Common myeloid progenitor, CD34-positive (primary cell): ENCODE measurements at regions of chr12 and their contacts with region 1.

Region 1: DNA sequence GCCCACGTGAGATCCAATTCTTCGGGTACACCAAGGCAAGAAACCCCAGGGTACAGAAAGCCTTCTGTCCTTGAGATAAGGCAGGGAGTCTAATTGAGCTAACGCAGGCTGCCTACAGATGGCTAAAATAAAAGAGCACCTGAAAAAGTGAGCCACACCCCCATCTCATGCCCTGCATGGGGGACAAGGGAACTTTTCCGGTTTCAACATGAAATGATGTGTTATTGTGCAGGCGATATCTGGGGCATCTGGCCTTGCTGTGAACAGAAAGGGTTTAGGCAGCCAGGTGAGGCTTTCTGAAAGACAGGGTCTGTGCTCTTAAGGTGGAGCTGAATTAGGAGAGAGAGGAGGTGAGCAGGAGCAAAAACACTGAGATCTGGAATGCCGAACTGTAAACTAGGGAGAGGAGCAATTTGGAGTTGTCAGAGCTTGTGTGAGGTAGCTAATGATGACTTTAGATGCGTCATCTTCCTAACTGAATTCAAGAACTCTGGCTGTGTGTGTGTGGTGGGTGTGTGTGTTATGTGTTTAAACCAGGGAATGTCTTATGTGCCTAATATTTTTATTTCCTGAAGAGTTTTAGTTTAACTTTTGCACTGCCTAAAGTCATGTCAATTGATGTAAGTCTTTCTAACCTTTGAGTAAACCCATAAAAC is 20.1 kb upstream of the LDHB start:
- DNase-seq: no peak
- H3K4me3 ChIP-seq: no peak overlapping the region
- H3K27ac ChIP-seq: peak overlapping the region in 1 of 2 experiments; percentile 78
- H3K4me1 ChIP-seq: peaks cover 19 to 34% (median 27%) of the 10 kb centered on the region in 4 experiments
- H3K27me3 ChIP-seq: no peaks in the 10 kb centered on the region

Region 2: DNA sequence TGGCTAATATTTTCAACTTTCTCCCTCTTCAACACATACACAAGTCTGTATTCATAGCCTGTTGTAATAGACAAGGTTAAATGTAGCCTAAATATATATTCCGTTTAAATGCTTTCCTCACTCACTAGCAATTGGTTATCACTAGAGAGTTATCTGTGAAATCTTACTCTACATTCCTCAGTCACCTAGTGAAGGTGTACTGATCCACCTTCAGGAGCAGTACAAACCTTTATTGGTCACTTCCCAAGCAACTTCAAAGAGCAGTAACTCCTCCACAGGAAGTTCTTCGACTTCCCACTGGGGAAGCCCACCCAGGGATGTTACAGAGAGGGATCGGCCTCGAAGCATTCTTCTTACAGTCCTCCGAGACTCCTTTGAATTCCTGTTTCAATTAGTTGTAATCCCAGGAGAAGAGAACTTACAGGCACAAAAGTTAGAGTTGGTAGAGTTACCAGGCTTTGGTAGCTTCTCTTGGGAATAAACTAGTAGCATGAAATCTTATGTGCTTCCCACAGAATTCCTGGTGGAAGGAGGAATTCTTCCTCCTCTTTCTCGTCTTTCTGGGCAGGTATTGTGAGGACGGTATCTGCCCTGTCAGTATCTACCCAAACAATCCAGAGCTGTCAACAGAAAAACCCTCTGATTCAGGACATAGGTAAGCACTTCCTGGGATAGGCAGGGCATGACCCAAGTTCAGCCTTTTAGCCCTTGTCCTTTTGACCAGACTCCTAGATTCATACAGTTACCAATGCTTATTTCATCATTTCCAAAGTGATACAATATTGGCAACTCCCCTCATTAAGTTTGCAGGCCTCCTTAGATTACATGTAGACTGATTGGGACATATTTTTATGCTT is 73.3 kb before region 1 on chr12 and contains the start of gene GYS2:
- CTCF ChIA-PET with region 1: interaction called, 19 read pairs
- POLR2A ChIA-PET with region 1: no interaction called
- DNase-seq: no peak
- H3K4me3 ChIP-seq: no peak within 1 kb of the TSS
- H3K27ac ChIP-seq: no peak within 1 kb of the TSS
- H3K4me1 ChIP-seq: peaks cover 0 to 4% (median 0%) of the 10 kb centered on the region in 4 experiments
- H3K27me3 ChIP-seq: no peaks in the 10 kb centered on the region

Region 3: GRCh38 chr12:21657326-21658077 is 20.2 kb before region 1 on chr12 and contains the start of gene LDHB:
- CTCF ChIA-PET with region 1: interaction called, 12 read pairs
- POLR2A ChIA-PET with region 1: no interaction called
- DNase-seq: peak; percentile 96 to 98 (median 98)
- H3K4me3 ChIP-seq: peak within 1 kb of the TSS; percentile 52 to 97 (median 87)
- H3K27ac ChIP-seq: peak within 1 kb of the TSS; percentile 40 to 80
- H3K4me1 ChIP-seq: peaks cover 12 to 31% (median 21%) of the 10 kb centered on the region in 4 experiments
- H3K27me3 ChIP-seq: no peaks in the 10 kb centered on the region

Region 4: DNA sequence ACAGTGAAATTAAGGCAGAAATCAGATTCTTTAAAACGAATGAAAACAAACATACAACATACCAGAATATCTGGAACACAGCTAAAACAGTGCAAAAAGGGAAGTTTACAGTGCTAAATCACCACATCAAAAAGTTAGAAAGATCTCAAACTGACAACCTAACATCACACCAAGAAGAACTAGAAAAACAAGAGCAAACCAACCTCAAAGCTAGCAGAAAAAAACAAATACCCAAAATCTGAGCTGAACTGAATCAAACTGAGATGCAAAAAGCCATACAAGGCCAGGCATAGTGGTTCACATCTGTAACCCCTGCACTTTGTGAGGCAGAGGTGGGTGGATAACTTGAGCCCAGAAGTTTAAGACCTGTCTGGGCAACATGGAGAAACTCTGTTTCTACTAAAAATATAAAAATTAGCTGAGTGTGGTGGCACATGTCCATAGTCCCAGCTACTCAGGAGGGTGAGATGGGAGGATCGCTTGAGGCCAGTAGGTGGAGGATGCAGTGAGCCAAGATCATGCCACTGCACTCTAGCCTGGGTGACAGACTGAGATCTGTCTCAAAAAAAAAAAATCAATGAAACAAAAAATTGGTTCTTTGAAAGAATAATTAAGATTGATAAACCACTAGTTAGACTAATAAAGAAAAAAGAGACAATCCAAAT is 13.1 kb after region 1 on chr12:
- CTCF ChIA-PET with region 1: interaction called, 10 read pairs
- POLR2A ChIA-PET with region 1: no interaction called
- DNase-seq: no peak
- H3K4me3 ChIP-seq: no peak overlapping the region
- H3K27ac ChIP-seq: no peak overlapping the region
- H3K4me1 ChIP-seq: no peaks in the 10 kb centered on the region
- H3K27me3 ChIP-seq: no peaks in the 10 kb centered on the region

Region 5: GRCh38 chr12:21788089-21788983 is 110.6 kb after region 1 on chr12:
- CTCF ChIA-PET with region 1: no interaction called
- POLR2A ChIA-PET with region 1: no interaction called
- DNase-seq: no peak
- H3K4me3 ChIP-seq: no peak overlapping the region
- H3K27ac ChIP-seq: no peak overlapping the region
- H3K4me1 ChIP-seq: no peaks in the 10 kb centered on the region
- H3K27me3 ChIP-seq: no peaks in the 10 kb centered on the region

Region 6: GRCh38 chr12:22059976-22060647 is 382.4 kb after region 1 on chr12:
- CTCF ChIA-PET with region 1: no interaction called
- POLR2A ChIA-PET with region 1: no interaction called
- DNase-seq: peak in 2 of 3 donors; percentile 29 to 46
- H3K4me3 ChIP-seq: no peak overlapping the region
- H3K27ac ChIP-seq: no peak overlapping the region
- H3K4me1 ChIP-seq: peaks cover 0 to 8% (median 4%) of the 10 kb centered on the region in 4 experiments
- H3K27me3 ChIP-seq: no peaks in the 10 kb centered on the region